ENCODE measurements at regions of chr4 and their contacts with region 1.

Region 1: DNA sequence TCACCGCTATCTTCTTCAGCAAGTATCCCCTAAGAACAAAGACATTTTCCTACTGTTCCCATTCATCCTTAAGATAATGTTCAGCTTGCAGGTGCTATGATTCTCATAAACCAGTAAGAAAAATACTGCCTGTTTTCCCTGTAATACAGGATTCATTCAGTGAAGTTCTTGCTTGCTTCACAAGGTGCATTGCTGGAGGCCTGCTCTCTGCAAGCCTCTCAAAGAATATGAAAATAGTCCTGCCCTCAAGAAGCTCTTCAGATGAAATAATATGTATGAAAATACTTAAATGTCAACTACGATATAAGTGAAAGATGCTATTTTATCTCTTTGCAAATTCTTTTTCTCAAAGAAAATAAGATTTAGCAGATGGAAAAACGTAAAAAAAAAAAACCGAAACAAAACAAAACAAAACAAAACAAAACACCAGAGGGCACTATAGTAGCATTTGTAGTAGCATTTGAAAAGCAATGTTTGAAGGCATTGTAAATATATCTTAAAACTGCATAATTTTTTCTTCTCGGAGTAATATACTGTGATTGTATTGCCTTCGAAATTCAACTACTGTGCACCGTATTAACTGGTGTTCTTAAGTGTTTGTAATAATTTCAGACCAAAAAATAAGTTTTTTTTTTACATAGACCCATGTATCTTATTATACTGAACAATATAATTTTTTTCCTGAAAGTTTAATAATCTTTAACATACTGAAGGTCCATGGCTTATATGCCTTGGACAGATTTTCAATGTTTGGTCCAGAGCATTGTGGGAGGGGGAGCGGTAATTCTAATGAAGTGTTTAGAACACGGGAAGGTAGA is 26.0 kb downstream of the ADH4 start:
- DNase-seq: no peak
- ATAC-seq: peak in 1 of 4 donors; percentile 44
- H3K4me3 ChIP-seq: no peak overlapping the region
- H3K27ac ChIP-seq: no peak overlapping the region
- H3K4me1 ChIP-seq: no peaks in the 10 kb centered on the region
- H3K27me3 ChIP-seq: peaks cover 0 to 2% (median 0%) of the 10 kb centered on the region in 3 donors
- CTCF ChIP-seq: peak; percentile 44

Region 2: GRCh38 chr4:97614337-97614736 is 1503.7 kb before region 1 on chr4:
- intact Hi-C with region 1: no loop called
- DNase-seq: no peak
- ATAC-seq: no peak
- H3K4me3 ChIP-seq: no peak overlapping the region
- H3K27ac ChIP-seq: no peak overlapping the region
- H3K4me1 ChIP-seq: no peaks in the 10 kb centered on the region
- H3K27me3 ChIP-seq: no peaks in the 10 kb centered on the region
- CTCF ChIP-seq: no peak

Region 3: GRCh38 chr4:98890702-98891455 is 227.2 kb before region 1 on chr4:
- intact Hi-C with region 1: no loop called
- DNase-seq: no peak
- ATAC-seq: no peak
- H3K4me3 ChIP-seq: no peak overlapping the region
- H3K27ac ChIP-seq: no peak overlapping the region
- H3K4me1 ChIP-seq: no peaks in the 10 kb centered on the region
- H3K27me3 ChIP-seq: no peaks in the 10 kb centered on the region
- CTCF ChIP-seq: no peak

Region 4: DNA sequence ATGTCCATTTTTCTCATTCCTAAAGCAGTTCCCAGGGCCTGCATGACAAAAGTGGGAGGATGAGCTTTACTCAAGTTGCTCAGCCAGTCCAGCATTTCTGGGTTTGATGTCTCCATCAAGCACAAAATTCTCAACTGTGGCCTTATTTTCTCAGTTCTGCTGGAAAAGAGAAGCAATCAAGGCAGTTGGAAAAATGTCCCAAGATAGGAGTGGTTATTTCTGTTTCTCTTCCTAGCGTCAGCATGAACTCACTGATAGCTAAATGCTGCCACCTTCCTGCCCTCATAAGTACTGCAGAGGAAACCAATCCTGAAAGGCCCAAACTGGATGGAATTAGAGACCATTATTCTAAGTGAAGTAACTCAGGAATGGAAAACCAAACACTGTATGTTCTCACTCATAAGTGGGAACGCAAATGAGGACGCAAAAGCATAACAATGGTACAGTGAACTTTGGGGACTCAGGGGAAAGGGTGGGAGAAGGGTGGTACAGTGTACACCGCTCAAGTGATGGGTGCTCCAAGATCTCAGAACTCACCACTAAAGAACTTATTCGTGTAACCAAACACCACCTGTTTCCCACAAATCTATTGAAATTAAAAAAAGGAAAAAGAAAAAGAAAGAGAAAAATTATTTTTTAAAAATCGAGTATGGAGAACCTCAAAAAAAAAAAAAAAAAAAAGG is 287.5 kb after region 1 on chr4:
- intact Hi-C with region 1: loop called (anchors 1 to 2 kb)
- DNase-seq: peak; percentile 45 to 49
- ATAC-seq: peak; percentile 77 to 90 (median 86)
- H3K4me3 ChIP-seq: no peak overlapping the region
- H3K27ac ChIP-seq: no peak overlapping the region
- H3K4me1 ChIP-seq: peaks cover 10% of the 10 kb centered on the region
- H3K27me3 ChIP-seq: no peaks in the 10 kb centered on the region
- CTCF ChIP-seq: peak; percentile 96

Region 5: GRCh38 chr4:99462875-99463464 is 344.9 kb after region 1 on chr4:
- intact Hi-C with region 1: loop called in 1 of 2 experiments (anchors 2 kb)
- DNase-seq: peak in 1 of 2 donors; percentile 27
- ATAC-seq: peak; percentile 68 to 88 (median 82)
- H3K4me3 ChIP-seq: no peak overlapping the region
- H3K27ac ChIP-seq: no peak overlapping the region
- H3K4me1 ChIP-seq: no peaks in the 10 kb centered on the region
- H3K27me3 ChIP-seq: no peaks in the 10 kb centered on the region
- CTCF ChIP-seq: peak; percentile 86